Mammary epithelial cell (primary cell): ENCODE measurements at regions of chr3 and their contacts with region 1.

Region 1: DNA sequence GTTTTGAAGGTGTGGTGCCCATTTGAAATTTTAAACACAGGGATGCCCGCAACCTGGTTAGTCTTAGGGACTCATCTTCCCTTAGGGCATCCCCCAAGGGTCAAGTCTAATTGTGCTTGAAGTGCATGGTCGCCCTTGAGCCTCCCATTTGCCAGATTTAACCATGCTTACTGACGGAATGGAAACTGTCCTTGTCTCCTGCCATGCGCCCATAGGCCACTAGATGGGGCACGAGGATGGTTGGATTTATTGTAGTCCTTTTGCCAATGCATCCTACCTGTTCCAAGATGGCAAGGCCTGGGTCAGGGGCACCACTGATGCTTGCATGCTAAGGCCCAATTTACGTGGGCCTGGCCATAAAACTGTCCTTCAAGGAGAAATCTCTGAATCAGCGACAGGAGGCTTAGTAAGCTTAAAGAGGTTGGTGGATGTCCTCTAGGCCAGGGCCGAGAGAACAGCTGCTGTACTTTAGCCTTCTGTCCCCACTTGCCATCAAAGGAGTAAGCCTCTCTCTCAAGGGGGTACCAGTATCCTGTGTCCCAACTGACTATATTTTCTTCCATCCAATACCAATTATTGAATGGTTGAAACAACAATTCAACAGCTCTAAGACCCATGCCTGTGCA is 355.4 kb downstream of the OTOL1 start:
- DNase-seq: peak; percentile 29
- H3K4me3 ChIP-seq: no peak overlapping the region
- H3K27ac ChIP-seq: no peak overlapping the region
- H3K4me1 ChIP-seq: no peaks in the 10 kb centered on the region
- H3K27me3 ChIP-seq: no peaks in the 10 kb centered on the region
- CTCF ChIP-seq: peak; percentile 84 to 92

Region 2: DNA sequence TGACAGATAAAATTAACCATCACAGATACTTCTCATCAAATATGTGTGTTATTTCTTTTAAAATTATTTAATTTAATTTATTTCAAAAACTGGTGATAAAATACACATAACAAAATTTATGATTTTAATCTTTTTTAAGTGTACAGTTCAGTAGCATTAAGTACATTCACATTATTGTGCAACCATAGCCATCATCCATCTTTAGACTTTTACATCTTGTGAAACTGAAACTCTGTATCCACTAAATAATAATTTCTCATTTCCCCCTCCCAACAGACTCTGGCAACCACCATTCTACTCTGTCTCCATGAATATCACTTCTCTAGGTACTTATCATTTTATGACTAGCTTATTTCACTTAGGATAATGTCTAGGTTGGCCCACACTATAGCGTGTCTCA is 313.1 kb before region 1 on chr3:
- CTCF ChIA-PET with region 1: no interaction called
- dilution Hi-C with region 1: no loop called
- in situ Hi-C with region 1: no loop called
- intact Hi-C with region 1: no loop called
- DNase-seq: no peak
- H3K4me3 ChIP-seq: no peak overlapping the region
- H3K27ac ChIP-seq: no peak overlapping the region
- H3K4me1 ChIP-seq: no peaks in the 10 kb centered on the region
- H3K27me3 ChIP-seq: no peaks in the 10 kb centered on the region
- CTCF ChIP-seq: no peak

Region 3: GRCh38 chr3:161560008-161560637 is 291.9 kb before region 1 on chr3:
- CTCF ChIA-PET with region 1: no interaction called
- dilution Hi-C with region 1: no loop called
- in situ Hi-C with region 1: no loop called
- intact Hi-C with region 1: loop called (anchors 5 kb)
- DNase-seq: peak; percentile 23
- H3K4me3 ChIP-seq: no peak overlapping the region
- H3K27ac ChIP-seq: no peak overlapping the region
- H3K4me1 ChIP-seq: peaks cover 7% of the 10 kb centered on the region
- H3K27me3 ChIP-seq: peaks cover 4% of the 10 kb centered on the region
- CTCF ChIP-seq: peak; percentile 43 to 78

Region 4: GRCh38 chr3:161796780-161797179 is 55.3 kb before region 1 on chr3:
- CTCF ChIA-PET with region 1: no interaction called
- dilution Hi-C with region 1: loop called (anchors 5 kb)
- in situ Hi-C with region 1: no loop called
- intact Hi-C with region 1: no loop called
- DNase-seq: no peak
- H3K4me3 ChIP-seq: no peak overlapping the region
- H3K27ac ChIP-seq: no peak overlapping the region
- H3K4me1 ChIP-seq: no peaks in the 10 kb centered on the region
- H3K27me3 ChIP-seq: no peaks in the 10 kb centered on the region
- CTCF ChIP-seq: no peak

Region 5: GRCh38 chr3:163056874-163057497 is 1204.9 kb after region 1 on chr3:
- CTCF ChIA-PET with region 1: no interaction called
- dilution Hi-C with region 1: no loop called
- in situ Hi-C with region 1: no loop called
- intact Hi-C with region 1: loop called (anchors 10 kb)
- DNase-seq: peak; percentile 5
- H3K4me3 ChIP-seq: no peak overlapping the region
- H3K27ac ChIP-seq: no peak overlapping the region
- H3K4me1 ChIP-seq: no peaks in the 10 kb centered on the region
- H3K27me3 ChIP-seq: no peaks in the 10 kb centered on the region
- CTCF ChIP-seq: peak; percentile 59 to 74